AG04450 (cell line): ENCODE measurements at regions of chr16 and their contacts with region 1.

Region 1: GRCh38 chr16:24568392-24568791 is 29.0 kb downstream of the RBBP6 start:
- DNase-seq: no peak
- H3K4me3 ChIP-seq: no peak overlapping the region
- H3K27ac ChIP-seq: no peak overlapping the region
- H3K27me3 ChIP-seq: no peaks in the 10 kb centered on the region
- CTCF ChIP-seq: peak; percentile 41

Region 2: DNA sequence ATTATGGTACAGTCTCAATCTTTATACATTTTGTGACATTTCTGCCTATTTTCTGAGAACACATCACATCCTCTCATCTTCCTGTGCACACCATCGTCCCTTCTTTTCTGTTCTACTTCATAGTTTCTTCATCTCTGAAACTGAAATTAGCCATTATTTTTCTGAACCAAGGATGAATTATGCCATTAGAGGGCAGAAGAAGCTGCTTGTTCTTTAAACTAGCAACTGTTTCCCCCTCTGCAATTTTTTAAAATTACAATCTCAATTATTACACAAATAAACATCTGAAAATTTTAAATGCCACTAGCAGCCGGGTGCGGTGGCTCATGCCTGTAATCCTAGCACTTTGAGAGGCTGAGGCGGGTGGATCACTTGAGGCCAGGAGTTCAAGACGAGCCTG is 12.3 kb after region 1 on chr16:
- CTCF ChIA-PET with region 1: interaction called, 14 read pairs
- POLR2A ChIA-PET with region 1: no interaction called
- DNase-seq: peak; percentile 10
- H3K4me3 ChIP-seq: no peak overlapping the region
- H3K27ac ChIP-seq: no peak overlapping the region
- H3K27me3 ChIP-seq: no peaks in the 10 kb centered on the region
- CTCF ChIP-seq: peak; percentile 64

Region 3: DNA sequence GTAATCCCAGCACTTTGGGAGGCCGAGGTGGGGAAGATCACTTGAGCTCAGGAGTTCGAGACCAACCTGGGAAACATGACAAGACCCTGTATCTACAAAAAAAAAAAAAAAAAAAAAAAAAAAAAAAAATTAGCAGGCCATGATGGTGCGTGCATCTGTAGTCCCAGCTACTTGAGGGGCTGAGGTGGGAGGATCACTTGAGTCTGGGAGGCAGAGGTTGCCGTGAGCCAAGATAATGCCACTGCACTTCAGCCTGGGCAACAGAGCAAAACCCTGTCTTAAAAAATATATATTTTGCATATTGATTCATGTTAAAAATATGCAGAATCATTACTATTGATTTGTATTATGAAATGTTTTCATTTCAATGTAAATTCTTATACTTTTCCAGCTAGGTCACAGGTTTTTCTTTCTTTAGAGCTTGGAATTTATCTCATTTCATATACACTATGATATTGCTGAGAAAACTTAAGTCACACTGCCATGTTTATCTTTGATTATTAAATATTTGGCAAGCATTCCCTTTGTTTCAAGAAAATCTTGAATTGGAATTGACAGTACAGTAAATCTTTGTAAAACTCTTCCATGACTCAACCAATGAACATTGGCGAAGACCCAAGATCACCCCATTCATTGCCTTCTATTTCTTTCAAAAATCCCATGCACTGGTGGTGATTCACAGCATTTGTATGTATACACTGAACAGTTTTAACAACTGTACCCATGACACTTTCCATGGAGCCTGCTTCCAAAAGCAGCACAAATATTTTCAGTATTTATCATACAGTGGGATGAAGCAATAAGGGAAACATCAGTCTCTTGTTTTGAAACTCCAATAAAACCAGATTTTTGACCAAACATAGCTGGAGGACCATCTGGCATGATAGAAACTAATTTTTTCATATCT is 77.6 kb after region 1 on chr16:
- CTCF ChIA-PET with region 1: no interaction called
- POLR2A ChIA-PET with region 1: no interaction called
- DNase-seq: peak; percentile 99
- H3K4me3 ChIP-seq: no peak overlapping the region
- H3K27ac ChIP-seq: peak overlapping the region; percentile 86
- H3K27me3 ChIP-seq: no peaks in the 10 kb centered on the region
- CTCF ChIP-seq: no peak

Region 4: DNA sequence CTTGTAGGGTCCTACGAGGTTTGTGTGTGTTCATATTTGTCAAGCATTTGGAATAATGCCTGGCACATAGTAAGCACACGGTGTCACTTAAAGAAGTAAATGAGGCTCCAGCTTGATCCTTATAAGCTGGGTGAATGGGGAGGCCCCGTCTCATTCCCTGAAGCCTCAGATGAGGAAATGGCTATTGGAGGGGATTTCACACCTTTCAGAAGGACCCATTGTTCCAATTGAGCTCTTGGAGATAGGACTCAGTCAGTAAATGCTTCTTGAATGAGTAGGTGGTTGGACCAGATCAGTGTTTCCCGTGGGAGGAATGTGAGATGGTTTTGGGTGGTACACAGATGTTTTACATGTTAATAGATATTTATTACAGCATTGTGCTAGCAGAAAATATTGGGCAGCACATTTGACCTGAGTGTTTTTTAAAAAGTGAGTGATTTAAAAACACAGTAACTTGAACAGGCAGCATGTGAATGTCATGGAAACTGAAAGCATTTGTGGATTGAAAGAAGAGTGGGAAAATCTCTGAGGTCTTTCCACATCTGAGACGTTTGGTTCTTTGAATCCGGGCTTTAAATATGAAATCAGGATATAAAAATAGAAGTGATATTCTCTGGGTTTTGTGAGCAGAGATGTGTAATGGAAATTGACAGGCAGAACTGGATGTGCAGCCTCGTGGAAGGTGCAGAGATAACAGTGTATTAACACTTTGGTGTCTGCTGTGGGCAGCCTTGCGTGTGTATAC is 483.2 kb after region 1 on chr16:
- CTCF ChIA-PET with region 1: no interaction called
- POLR2A ChIA-PET with region 1: no interaction called
- DNase-seq: no peak
- H3K4me3 ChIP-seq: no peak overlapping the region
- H3K27ac ChIP-seq: peak overlapping the region; percentile 22
- H3K27me3 ChIP-seq: no peaks in the 10 kb centered on the region
- CTCF ChIP-seq: no peak